ENCODE measurements at regions of chr1 and their contacts with region 1.

Region 1: GRCh38 chr1:155277070-155277895 is at the start of gene HCN3:
- DNase-seq: peak; percentile 88
- ATAC-seq: peak; percentile 82
- H3K4me3 ChIP-seq: peak within 1 kb of the TSS; percentile 70 to 80
- H3K27ac ChIP-seq: peak within 1 kb of the TSS; percentile 56
- H3K4me1 ChIP-seq: peaks cover 16% of the 10 kb centered on the region
- H3K27me3 ChIP-seq: no peaks in the 10 kb centered on the region
- CTCF ChIP-seq: peak; percentile 95
- total RNA-seq, gene HCN3: 7.8 TPM

Region 2: DNA sequence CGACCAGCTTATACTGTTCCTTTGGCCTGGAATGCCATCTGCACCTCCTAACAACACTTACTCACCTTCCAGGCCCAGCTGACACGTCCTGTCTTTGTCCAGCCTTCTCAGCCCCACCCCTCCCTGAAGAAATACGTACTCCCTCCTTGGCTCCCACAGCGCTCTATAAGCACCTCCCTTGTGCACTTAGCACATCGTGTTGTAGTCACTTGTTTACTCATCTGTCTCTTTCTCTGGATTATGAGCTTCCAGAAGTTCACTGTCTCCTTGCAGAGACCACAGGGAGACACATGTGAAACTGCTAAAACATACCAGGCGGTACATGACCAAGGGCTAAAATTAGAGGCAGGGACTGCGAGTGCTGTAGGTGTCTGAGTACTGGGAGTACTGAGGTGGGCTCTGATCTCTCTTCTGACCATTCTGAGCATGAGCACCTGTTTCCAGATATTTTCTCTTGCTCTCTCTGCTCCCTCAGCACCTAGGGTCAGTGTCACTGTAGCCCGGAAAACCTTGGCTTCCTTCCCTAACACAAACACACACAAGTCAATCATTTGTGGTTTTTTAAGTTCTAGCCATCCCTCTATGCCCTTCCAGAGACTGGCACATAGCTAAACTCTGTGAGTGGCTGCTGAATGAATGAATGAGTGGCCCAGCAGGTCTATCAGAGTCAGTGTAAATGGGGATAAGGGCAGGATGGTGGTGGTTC is 238.5 kb before region 1 on chr1:
- CTCF ChIA-PET with region 1: no interaction called
- POLR2A ChIA-PET with region 1: no interaction called
- in situ Hi-C with region 1: no loop called
- intact Hi-C with region 1: no loop called
- DNase-seq: no peak
- ATAC-seq: no peak
- H3K4me3 ChIP-seq: no peak overlapping the region
- H3K27ac ChIP-seq: no peak overlapping the region
- H3K4me1 ChIP-seq: no peaks in the 10 kb centered on the region
- H3K27me3 ChIP-seq: no peaks in the 10 kb centered on the region
- CTCF ChIP-seq: no peak

Region 3: DNA sequence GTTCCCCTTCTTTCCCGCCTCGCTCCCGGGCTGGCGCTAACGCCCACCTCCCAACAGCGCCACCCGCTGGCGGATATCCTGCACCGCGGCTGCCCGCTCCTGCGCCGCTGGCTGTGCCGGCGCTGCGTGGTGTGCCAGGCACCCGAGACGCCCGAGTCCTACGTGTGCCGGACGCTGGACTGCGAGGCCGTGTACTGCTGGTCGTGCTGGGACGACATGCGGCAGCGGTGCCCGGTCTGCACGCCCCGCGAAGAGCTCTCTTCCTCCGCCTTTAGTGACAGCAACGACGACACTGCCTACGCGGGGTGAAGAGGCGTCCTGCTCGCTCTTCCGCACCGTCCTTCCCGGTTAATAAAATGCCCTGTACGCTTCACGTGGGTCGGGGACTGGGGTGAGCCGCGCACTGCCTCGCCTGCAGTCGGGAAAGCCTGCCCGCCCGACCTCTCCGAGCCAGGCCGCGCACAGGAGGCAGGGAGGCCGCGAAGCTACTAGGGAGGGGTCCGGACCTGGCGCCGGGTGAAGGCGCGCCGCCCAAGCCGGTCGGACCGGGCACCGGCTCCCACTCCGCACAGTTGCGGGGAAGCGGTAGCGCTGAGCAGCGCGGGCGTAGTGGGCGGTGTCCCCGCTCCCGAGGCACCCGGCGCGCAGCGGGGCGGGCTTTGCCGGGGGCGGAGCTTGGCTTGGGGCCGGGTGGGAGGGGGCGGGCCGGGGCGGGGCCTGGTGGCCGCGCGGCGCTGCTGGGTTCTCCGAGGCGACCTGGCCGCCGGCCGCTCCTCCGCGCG is 226.5 kb before region 1 on chr1 and contains the start of gene ADAM15:
- CTCF ChIA-PET with region 1: no interaction called
- POLR2A ChIA-PET with region 1: no interaction called
- in situ Hi-C with region 1: no loop called
- intact Hi-C with region 1: no loop called
- DNase-seq: no peak
- ATAC-seq: peak; percentile 88
- H3K4me3 ChIP-seq: peak within 1 kb of the TSS; percentile 69 to 74
- H3K27ac ChIP-seq: peak within 1 kb of the TSS; percentile 77
- H3K4me1 ChIP-seq: peaks cover 14% of the 10 kb centered on the region
- H3K27me3 ChIP-seq: no peaks in the 10 kb centered on the region
- CTCF ChIP-seq: peak; percentile 97
- total RNA-seq, gene ADAM15: 41.7 TPM

Region 4: DNA sequence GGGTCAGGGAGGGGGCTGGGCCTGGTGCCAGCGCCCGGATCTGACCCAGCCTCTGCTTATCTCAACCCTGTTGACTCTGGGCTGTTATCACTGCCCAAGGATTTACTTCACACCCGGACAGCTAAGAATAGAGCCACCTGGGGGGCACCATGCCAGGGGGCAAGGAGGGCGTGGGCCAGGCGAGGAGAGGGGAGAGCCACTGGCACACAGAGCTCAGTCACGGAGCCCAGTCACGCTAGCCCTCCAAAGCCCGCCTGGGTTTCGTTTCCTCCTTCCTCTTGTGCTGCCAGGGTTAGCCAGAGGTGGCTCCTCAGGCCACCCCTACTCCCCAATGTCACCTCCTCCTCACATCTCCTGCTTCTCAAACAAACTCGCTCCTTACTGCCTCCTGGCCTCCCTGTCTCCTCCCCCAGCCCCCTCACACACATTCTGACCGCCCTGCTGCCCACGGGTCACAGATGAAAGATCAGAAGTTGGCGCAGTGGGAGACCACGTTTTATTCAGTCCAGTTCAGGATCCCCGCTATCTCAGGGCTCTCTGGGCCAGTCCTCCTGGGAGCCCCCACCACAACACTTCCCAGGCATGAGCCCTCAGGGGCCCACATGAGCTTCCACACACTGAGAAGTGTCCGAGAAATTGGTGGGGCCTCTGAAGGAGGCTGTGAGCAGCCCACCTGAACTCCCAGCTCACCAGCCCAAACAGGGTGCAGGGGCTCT is 91.8 kb before region 1 on chr1:
- CTCF ChIA-PET with region 1: no interaction called
- POLR2A ChIA-PET with region 1: no interaction called
- in situ Hi-C with region 1: no loop called
- intact Hi-C with region 1: no loop called
- DNase-seq: no peak
- ATAC-seq: 0 out of 2 replicates have a peak, but pooled peaks have one; percentile 25
- H3K4me3 ChIP-seq: no peak overlapping the region
- H3K27ac ChIP-seq: no peak overlapping the region
- H3K4me1 ChIP-seq: peaks cover 2% of the 10 kb centered on the region
- H3K27me3 ChIP-seq: no peaks in the 10 kb centered on the region
- CTCF ChIP-seq: no peak

Region 5: GRCh38 chr1:155323798-155324610 is 46.7 kb after region 1 on chr1:
- CTCF ChIA-PET with region 1: interaction called, 3 read pairs
- POLR2A ChIA-PET with region 1: interaction called, 5 read pairs
- in situ Hi-C with region 1: no loop called
- intact Hi-C with region 1: loop called (anchors 1 kb)
- DNase-seq: peak; percentile 87
- ATAC-seq: peak; percentile 76
- H3K4me3 ChIP-seq: peak overlapping the region; percentile 92 to 96
- H3K27ac ChIP-seq: peak overlapping the region; percentile 95
- H3K4me1 ChIP-seq: peaks cover 47% of the 10 kb centered on the region
- H3K27me3 ChIP-seq: no peaks in the 10 kb centered on the region
- CTCF ChIP-seq: no peak

Region 6: GRCh38 chr1:155540000-155540874 is 263.0 kb after region 1 on chr1:
- CTCF ChIA-PET with region 1: no interaction called
- POLR2A ChIA-PET with region 1: no interaction called
- in situ Hi-C with region 1: no loop called
- intact Hi-C with region 1: no loop called
- DNase-seq: no peak
- ATAC-seq: no peak
- H3K4me3 ChIP-seq: no peak overlapping the region
- H3K27ac ChIP-seq: no peak overlapping the region
- H3K4me1 ChIP-seq: peaks cover 19% of the 10 kb centered on the region
- H3K27me3 ChIP-seq: no peaks in the 10 kb centered on the region
- CTCF ChIP-seq: no peak

Region 7: GRCh38 chr1:156319664-156320063 is 1042.4 kb after region 1 on chr1:
- CTCF ChIA-PET with region 1: no interaction called
- POLR2A ChIA-PET with region 1: interaction called, 11 read pairs
- in situ Hi-C with region 1: no loop called
- intact Hi-C with region 1: no loop called
- DNase-seq: no peak
- ATAC-seq: no peak
- H3K4me3 ChIP-seq: no peak overlapping the region
- H3K27ac ChIP-seq: no peak overlapping the region
- H3K4me1 ChIP-seq: no peaks in the 10 kb centered on the region
- H3K27me3 ChIP-seq: no peaks in the 10 kb centered on the region
- CTCF ChIP-seq: peak; percentile 76

Measured in Panc1 (cell line).